Prostate gland (tissue), 2 donors: ENCODE measurements at regions of chr17 and their contacts with region 1.

Region 1: GRCh38 chr17:51537996-51538550 is 277.7 kb downstream of the UTP18 start:
- DNase-seq: no peak
- H3K4me3 ChIP-seq: no peak overlapping the region
- H3K27ac ChIP-seq: no peak overlapping the region
- H3K4me1 ChIP-seq: no peaks in the 10 kb centered on the region
- H3K27me3 ChIP-seq: no peaks in the 10 kb centered on the region
- CTCF ChIP-seq: no peak
- POLR2A ChIP-seq: no peak

Region 2: GRCh38 chr17:51322390-51323029 is 215.6 kb before region 1 on chr17:
- intact Hi-C with region 1: loop called (anchors 10 kb)
- DNase-seq: no peak
- H3K4me3 ChIP-seq: no peak overlapping the region
- H3K27ac ChIP-seq: no peak overlapping the region
- H3K4me1 ChIP-seq: no peaks in the 10 kb centered on the region
- H3K27me3 ChIP-seq: no peaks in the 10 kb centered on the region
- CTCF ChIP-seq: peak in 2 of 4 experiments; percentile 29 to 47
- POLR2A ChIP-seq: no peak

Region 3: DNA sequence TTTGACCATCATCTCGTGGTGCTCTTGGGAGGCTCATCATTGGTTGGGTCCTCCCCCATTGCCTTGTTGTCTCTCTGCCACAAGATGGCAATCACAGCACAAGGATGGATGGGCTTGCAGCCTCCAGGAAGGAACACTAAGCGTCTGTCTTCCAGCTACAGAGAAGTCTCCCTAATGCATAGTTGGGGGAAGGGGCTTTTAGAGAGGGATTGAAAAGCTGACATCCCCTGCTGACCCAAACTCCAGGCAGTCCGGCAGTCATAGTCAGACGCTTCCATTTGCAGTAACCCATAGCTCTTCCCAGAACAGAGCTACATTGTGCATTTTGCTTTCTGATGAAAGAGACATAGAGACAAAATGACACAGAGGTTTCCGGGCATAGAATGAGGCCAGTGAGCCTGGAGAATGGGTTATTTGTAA is 166.3 kb before region 1 on chr17:
- intact Hi-C with region 1: loop called (anchors 5 kb)
- DNase-seq: peak; percentile 34
- H3K4me3 ChIP-seq: no peak overlapping the region
- H3K27ac ChIP-seq: no peak overlapping the region
- H3K4me1 ChIP-seq: no peaks in the 10 kb centered on the region
- H3K27me3 ChIP-seq: no peaks in the 10 kb centered on the region
- CTCF ChIP-seq: peak in 3 of 4 experiments; percentile 45 to 55 (median 52)
- POLR2A ChIP-seq: no peak

Region 4: GRCh38 chr17:51461578-51462004 is 76.5 kb before region 1 on chr17:
- intact Hi-C with region 1: loop called (anchors 10 kb)
- DNase-seq: peak; percentile 14
- H3K4me3 ChIP-seq: no peak overlapping the region
- H3K27ac ChIP-seq: no peak overlapping the region
- H3K4me1 ChIP-seq: no peaks in the 10 kb centered on the region
- H3K27me3 ChIP-seq: no peaks in the 10 kb centered on the region
- CTCF ChIP-seq: peak; percentile 20 to 59 (median 42)
- POLR2A ChIP-seq: no peak